ENCODE measurements at regions of chr9 and their contacts with region 1.

Region 1: GRCh38 chr9:109903515-109904138 is 123.6 kb downstream of the PALM2AKAP2 start:
- DNase-seq: no peak
- H3K4me3 ChIP-seq: no peak overlapping the region
- H3K27ac ChIP-seq: no peak overlapping the region
- H3K4me1 ChIP-seq: peaks cover 5% of the 10 kb centered on the region
- H3K27me3 ChIP-seq: no peaks in the 10 kb centered on the region
- CTCF ChIP-seq: peak; percentile 59 to 82 (median 59)
- POLR2A ChIP-seq: no peak

Region 2: DNA sequence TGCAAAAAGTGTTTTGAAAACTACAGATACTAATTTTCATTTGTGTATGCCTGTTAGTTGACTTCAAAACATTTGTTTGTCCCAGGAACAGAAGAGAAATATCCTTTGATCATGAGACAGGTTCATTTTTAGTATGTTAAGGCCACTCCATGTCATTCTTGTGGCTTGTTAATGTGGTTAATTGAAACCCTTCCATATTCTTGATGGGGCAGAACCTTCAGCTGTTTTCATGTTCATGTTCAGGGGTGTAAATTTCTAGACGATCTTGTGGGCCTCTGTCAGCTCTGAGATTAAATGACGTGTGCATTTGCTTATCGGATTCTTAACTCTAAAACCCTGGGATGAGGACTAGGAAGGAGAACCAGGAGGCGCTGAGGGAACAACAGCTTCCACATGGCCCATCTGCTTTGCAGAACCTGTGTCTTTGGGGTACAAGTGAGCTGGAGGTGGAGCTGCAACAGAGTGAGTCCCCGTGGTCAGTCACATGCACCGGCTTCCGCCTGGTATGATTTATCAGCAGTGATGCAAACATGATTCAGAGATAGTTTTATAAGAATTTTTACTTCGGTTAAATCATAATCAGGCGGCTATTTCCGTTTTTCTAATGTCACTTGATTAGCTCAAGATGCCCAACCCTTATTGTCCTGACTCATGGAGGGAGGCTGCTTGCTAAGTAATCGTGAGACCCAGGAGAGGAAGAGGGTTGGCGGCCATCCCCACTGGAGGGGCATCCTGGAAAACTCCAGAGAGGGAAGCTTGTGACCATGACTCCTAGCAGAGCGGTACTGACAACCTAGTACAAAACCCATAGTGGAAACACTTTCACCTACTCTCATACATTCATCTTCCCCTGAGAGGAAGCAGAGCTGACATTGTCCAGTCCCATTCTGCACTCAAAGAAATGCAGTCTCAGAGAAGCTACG is 166.0 kb after region 1 on chr9:
- intact Hi-C with region 1: loop called (anchors 10 kb)
- DNase-seq: no peak
- H3K4me3 ChIP-seq: no peak overlapping the region
- H3K27ac ChIP-seq: peak overlapping the region; percentile 22
- H3K4me1 ChIP-seq: peaks cover 7% of the 10 kb centered on the region
- H3K27me3 ChIP-seq: no peaks in the 10 kb centered on the region
- CTCF ChIP-seq: no peak
- POLR2A ChIP-seq: no peak

Region 3: GRCh38 chr9:110152704-110153374 is 249.2 kb after region 1 on chr9:
- intact Hi-C with region 1: loop called (anchors 5 kb)
- DNase-seq: no peak
- H3K4me3 ChIP-seq: no peak overlapping the region
- H3K27ac ChIP-seq: no peak overlapping the region
- H3K4me1 ChIP-seq: peaks cover 30% of the 10 kb centered on the region
- H3K27me3 ChIP-seq: no peaks in the 10 kb centered on the region
- CTCF ChIP-seq: peak; percentile 25 to 53 (median 44)
- POLR2A ChIP-seq: no peak

Region 4: GRCh38 chr9:110217656-110218099 is 314.1 kb after region 1 on chr9:
- intact Hi-C with region 1: loop called (anchors 5 kb)
- DNase-seq: no peak
- H3K4me3 ChIP-seq: no peak overlapping the region
- H3K27ac ChIP-seq: no peak overlapping the region
- H3K4me1 ChIP-seq: no peaks in the 10 kb centered on the region
- H3K27me3 ChIP-seq: no peaks in the 10 kb centered on the region
- CTCF ChIP-seq: peak; percentile 68 to 79 (median 73)
- POLR2A ChIP-seq: no peak

Measured in vagina (tissue), 2 donors.